Prostate gland (tissue), 2 donors: ENCODE measurements at regions of chr5 and their contacts with region 1.

Region 1: GRCh38 chr5:139262742-139263445 is 30.6 kb upstream of the MATR3 start:
- DNase-seq: peak; percentile 83
- H3K4me3 ChIP-seq: no peak overlapping the region
- H3K27ac ChIP-seq: peak overlapping the region in 1 of 2 donors; percentile 27
- H3K4me1 ChIP-seq: no peaks in the 10 kb centered on the region
- H3K27me3 ChIP-seq: no peaks in the 10 kb centered on the region
- CTCF ChIP-seq: peak; percentile 65 to 93 (median 86)
- POLR2A ChIP-seq: no peak

Region 2: DNA sequence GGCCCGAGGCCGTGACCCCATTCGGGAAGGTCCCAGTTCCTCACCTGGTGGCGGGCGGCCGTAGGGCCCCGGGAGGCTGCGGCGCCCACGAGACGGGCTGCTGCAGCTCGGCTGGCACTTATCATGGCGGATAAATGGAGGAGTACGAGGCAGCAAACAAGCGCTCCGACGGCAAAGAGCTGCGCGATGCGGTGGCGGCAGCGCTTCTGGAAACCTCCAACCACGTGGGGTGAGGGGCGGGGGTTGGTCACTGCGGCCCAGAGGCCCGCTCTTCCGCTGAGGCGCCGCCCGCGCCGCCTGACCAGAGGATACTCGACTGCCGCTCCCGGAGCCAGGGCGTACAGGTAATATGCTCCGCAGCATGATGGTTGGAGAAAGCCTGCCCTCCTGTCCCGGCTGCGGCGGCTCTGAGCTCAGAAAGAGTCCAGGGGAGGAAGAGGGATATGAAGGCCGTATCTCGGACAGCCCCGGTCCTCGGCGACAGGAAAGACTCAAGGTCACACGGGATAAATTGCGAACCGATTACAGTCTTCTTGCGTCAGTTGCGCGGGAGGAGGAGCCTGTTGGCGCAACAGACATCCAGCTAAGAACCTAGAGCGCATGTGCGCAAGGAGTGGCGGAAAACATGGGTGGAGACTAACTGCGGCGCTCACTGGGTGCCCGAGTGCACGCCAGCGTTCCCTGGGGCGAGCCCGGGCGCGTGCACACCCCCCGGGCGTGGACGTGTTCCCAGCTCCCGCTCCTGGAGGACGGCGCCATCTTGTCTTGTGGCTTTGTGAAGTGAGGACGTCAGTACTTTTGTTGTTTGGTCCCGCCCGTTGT is 687.5 kb before region 1 on chr5 and contains the start of gene HSPA9:
- intact Hi-C with region 1: loop called (anchors 5 kb)
- DNase-seq: peak; percentile 98
- H3K4me3 ChIP-seq: peak within 1 kb of the TSS; percentile 81 to 96
- H3K27ac ChIP-seq: peak within 1 kb of the TSS; percentile 97 to 99
- H3K4me1 ChIP-seq: no peaks in the 10 kb centered on the region
- H3K27me3 ChIP-seq: no peaks in the 10 kb centered on the region
- CTCF ChIP-seq: peak in 2 of 4 experiments; percentile 42 to 45
- POLR2A ChIP-seq: peak; percentile 85
- total RNA-seq, gene HSPA9: 273 to 331 TPM

Region 3: DNA sequence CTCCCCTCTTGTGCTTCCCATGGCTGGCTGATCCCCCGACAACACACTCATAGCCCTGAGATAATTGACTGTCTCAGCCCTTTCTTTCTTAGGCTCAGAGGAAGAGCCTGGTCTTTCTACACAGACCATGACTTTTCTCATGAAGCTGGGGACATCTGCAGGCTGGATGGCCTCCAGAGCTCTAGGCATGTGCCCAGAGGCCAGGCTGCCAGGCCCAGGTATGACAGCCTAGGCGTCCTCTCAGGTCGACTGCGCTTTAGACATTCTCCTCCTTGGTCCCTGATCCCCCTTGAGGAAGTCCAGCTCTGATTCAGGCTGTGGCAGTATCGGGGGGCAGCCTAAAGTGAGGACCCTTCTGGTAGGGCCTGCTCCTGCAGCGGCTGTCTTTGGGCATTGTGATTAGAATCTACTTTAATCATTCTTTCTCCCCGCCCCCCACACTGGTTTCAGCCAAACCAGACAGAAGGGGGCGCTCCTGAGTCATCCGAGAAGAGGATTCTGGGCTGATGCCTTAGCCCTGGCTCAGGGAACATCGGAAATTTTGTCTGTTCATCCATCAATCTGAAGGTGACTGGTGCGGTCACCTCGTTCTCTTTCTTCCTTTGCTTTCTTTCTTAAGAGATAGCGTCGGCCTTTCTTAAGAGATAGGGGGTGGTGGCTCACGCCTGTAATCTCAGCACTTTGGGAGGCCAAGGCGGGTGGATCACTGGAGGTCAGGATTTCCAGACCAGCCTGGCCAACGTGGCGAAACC is 621.2 kb before region 1 on chr5:
- intact Hi-C with region 1: loop called (anchors 10 kb)
- DNase-seq: peak; percentile 52
- H3K4me3 ChIP-seq: no peak overlapping the region
- H3K27ac ChIP-seq: no peak overlapping the region
- H3K4me1 ChIP-seq: no peaks in the 10 kb centered on the region
- H3K27me3 ChIP-seq: no peaks in the 10 kb centered on the region
- CTCF ChIP-seq: peak; percentile 42 to 74 (median 62)
- POLR2A ChIP-seq: no peak

Region 4: GRCh38 chr5:138752951-138753793 is 509.7 kb before region 1 on chr5 and contains the start of gene CTNNA1:
- intact Hi-C with region 1: loop called (anchors 5 kb)
- DNase-seq: peak; percentile 79
- H3K4me3 ChIP-seq: peak within 1 kb of the TSS; percentile 73 to 84
- H3K27ac ChIP-seq: peak within 1 kb of the TSS; percentile 98
- H3K4me1 ChIP-seq: no peaks in the 10 kb centered on the region
- H3K27me3 ChIP-seq: no peaks in the 10 kb centered on the region
- CTCF ChIP-seq: peak in 2 of 4 experiments; percentile 19 to 46
- POLR2A ChIP-seq: peak; percentile 82
- total RNA-seq, gene CTNNA1: 210 to 212 TPM

Region 5: DNA sequence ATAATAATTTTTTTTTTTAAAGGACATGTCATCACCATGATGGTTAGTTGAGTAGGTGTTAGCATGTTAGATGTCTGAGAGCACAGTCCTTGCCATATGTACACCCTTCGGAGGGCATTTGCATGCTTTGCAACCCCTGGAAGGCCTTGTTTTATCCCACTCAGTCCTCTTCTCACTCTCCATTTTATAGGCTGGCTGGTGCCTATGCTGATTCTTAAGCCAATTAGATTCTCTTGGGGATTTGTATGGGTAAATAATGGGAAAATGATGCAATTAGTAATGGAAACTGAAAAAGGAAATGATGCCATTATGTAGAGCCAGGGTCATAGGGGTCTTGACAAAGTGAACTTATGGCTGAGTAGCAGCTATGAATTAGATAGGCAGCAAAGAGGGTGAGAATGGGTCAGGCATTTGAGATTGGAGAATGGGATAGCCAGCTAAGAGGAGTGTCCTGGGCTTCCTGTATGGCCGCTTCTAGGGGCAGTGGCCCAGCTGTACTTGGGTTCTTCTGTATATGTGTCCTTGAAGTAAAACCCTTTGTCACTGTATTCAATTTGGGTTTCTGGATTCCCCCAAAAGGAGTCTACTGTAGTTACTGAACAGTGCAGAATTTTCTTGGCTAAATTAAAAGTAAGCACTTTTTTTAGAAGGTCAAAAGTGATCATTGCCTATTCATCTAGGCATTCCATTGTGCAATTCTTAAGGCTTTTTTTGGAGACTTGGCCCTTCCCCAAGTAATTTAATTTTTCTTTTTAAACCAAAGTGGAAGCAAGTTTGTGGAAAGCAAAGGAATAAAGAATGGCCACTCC is 419.4 kb before region 1 on chr5:
- intact Hi-C with region 1: no loop called
- DNase-seq: no peak
- H3K4me3 ChIP-seq: no peak overlapping the region
- H3K27ac ChIP-seq: no peak overlapping the region
- H3K4me1 ChIP-seq: no peaks in the 10 kb centered on the region
- H3K27me3 ChIP-seq: no peaks in the 10 kb centered on the region
- CTCF ChIP-seq: no peak
- POLR2A ChIP-seq: no peak

Region 6: DNA sequence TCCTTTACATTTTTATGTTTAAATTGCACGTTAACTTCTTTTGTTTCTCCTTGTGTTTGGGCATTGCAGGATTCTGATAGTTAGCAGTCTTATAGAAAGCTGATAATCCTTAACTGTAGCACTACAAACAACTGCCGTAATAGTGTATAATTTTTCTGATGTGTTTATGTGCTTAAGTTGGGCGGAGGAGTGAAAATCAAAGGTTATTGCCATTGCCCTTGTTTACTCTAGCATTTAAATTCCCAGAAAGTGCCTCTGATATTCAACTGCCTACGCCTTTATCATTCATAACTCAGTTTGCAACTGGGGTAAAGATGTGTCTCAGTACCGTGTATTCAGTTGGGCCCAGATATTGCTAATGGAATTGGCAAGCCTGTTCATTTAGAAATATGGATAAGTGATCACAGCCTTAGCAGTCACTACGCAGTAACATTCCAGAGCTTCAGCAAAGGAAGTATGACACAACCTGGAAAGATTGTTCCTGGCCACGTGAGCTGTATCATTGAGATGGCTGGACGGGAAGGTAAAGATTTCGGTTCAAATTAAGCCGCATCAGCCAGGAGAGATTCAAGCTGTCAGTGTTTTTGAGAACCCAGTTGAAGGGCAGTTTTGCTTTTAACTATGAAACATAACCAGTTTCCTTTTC is 359.6 kb before region 1 on chr5:
- intact Hi-C with region 1: no loop called
- DNase-seq: no peak
- H3K4me3 ChIP-seq: no peak overlapping the region
- H3K27ac ChIP-seq: no peak overlapping the region
- H3K4me1 ChIP-seq: no peaks in the 10 kb centered on the region
- H3K27me3 ChIP-seq: no peaks in the 10 kb centered on the region
- CTCF ChIP-seq: no peak
- POLR2A ChIP-seq: no peak

Region 7: DNA sequence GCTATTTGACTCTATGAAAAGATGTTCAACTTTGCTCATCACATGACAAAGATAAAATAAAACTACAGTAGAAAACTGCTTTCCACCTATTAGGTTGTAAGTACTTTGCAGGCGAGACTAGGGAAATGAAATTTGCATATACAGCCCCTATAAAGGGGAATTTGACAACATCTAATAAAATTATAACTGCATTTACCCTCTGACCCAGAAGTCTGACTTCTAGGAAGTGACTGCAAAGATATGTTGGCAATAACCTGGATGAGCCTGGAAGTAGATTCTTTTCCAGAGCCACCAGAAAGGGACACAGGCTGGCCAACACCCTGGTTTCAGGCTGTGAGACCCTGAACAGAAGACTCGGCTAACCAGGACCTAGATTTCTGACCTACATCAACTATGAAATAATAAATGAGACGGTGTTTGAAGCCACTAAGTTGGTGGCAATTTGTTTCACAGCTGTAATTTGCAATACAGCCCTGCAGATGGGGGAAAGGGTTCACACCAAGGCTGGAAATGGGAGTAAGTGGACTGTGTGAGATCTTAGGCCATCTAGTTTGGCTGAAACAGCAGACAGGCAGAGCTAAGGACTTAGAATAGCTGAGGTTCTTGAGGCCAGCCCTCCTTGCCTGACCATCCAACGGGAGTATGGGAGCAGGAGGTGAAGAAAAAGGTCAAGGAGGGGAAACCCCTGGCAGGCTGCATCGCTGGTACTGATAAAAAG is 171.3 kb before region 1 on chr5:
- intact Hi-C with region 1: loop called (anchors 5 kb)
- DNase-seq: no peak
- H3K4me3 ChIP-seq: no peak overlapping the region
- H3K27ac ChIP-seq: no peak overlapping the region
- H3K4me1 ChIP-seq: no peaks in the 10 kb centered on the region
- H3K27me3 ChIP-seq: no peaks in the 10 kb centered on the region
- CTCF ChIP-seq: peak in 1 of 4 experiments; percentile 18
- POLR2A ChIP-seq: no peak

Region 8: GRCh38 chr5:139246394-139246793 is 16.5 kb before region 1 on chr5:
- intact Hi-C with region 1: no loop called
- DNase-seq: no peak
- H3K4me3 ChIP-seq: no peak overlapping the region
- H3K27ac ChIP-seq: no peak overlapping the region
- H3K4me1 ChIP-seq: no peaks in the 10 kb centered on the region
- H3K27me3 ChIP-seq: no peaks in the 10 kb centered on the region
- CTCF ChIP-seq: no peak
- POLR2A ChIP-seq: no peak